ENCODE measurements at regions of chr19 and their contacts with region 1.

Region 1: GRCh38 chr19:480016-480855 is 16.1 kb upstream of the MADCAM1 start:
- DNase-seq: peak; percentile 63
- ATAC-seq: peak; percentile 66
- H3K4me3 ChIP-seq: peak overlapping the region in 1 of 3 experiments; percentile 66; a peak in 3 of 6 replicates
- H3K27ac ChIP-seq: no peak overlapping the region
- H3K4me1 ChIP-seq: peaks cover 16% of the 10 kb centered on the region
- H3K27me3 ChIP-seq: peaks cover 5 to 11% of the 10 kb centered on the region in 2 experiments; a peak in 4 of 5 replicates
- CTCF ChIP-seq: peak; percentile 95
- EP300 ChIP-seq: no peak
- POLR2A ChIP-seq: no peak
- RAD21 ChIP-seq: peak; percentile 83

Region 2: GRCh38 chr19:383922-384798 is 96.1 kb before region 1 on chr19:
- CTCF ChIA-PET with region 1: interaction called, 19 read pairs
- POLR2A ChIA-PET with region 1: no interaction called
- in situ Hi-C with region 1: loop called (anchors 5 kb)
- intact Hi-C with region 1: loop called (anchors 2 kb)
- DNase-seq: peak; percentile 22
- ATAC-seq: peak; percentile 94
- H3K4me3 ChIP-seq: no peak overlapping the region
- H3K27ac ChIP-seq: no peak overlapping the region
- H3K4me1 ChIP-seq: no peaks in the 10 kb centered on the region
- H3K27me3 ChIP-seq: peaks cover 6 to 46% of the 10 kb centered on the region in 2 experiments
- CTCF ChIP-seq: peak; percentile 86
- EP300 ChIP-seq: no peak
- POLR2A ChIP-seq: no peak
- RAD21 ChIP-seq: peak; percentile 86

Region 3: DNA sequence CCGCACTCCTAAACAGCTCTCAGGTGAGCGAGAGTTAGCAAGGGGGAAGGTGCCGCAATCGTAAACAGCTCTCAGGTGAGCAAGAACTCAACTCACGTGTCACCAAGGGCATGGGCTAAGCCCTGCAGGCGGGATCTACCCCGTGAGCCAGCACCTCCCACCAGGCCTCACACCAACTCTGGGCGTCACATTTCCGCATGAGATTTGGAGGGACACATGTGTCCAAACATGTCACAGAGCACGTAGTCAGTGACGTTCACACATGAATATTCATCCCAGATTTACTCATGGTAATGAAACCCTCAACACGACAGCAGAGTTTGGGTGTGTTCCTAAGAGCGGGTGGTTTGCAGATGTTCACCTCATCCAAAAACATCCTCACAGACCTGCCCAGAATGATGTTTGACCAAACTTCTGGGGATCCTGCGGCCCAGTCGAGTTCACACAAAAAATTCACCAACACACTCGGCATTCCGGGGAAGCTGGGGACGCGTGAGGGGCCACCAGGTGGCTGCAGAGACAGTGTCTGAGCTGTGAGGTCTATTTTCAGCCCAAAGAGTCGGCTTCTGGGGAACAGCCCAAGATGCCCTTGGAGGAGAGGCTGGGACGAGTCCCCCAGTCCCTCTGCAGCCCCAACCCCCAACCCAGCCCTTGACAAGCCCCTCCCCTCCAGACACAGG is 90.8 kb before region 1 on chr19:
- CTCF ChIA-PET with region 1: interaction called, 19 read pairs
- POLR2A ChIA-PET with region 1: no interaction called
- in situ Hi-C with region 1: loop called (anchors 5 kb)
- intact Hi-C with region 1: loop called (anchors 2 kb)
- DNase-seq: no peak
- ATAC-seq: peak; percentile 36; the same call in 2 of the 3 replicates
- H3K4me3 ChIP-seq: no peak overlapping the region
- H3K27ac ChIP-seq: no peak overlapping the region
- H3K4me1 ChIP-seq: no peaks in the 10 kb centered on the region
- H3K27me3 ChIP-seq: peaks cover 20 to 58% of the 10 kb centered on the region in 2 experiments; a peak in 4 of 5 replicates
- CTCF ChIP-seq: peak; percentile 44
- EP300 ChIP-seq: no peak
- POLR2A ChIP-seq: no peak
- RAD21 ChIP-seq: no peak

Measured in HepG2 (cell line).